RWPE1 (cell line): ENCODE measurements at regions of chr5 and their contacts with region 1.

Region 1: GRCh38 chr5:69093771-69094482 is at the start of gene SLC30A5:
- DNase-seq: peak; percentile 100
- H3K27ac ChIP-seq: peak within 1 kb of the TSS; percentile 87
- CTCF ChIP-seq: peak; percentile 97

Region 2: DNA sequence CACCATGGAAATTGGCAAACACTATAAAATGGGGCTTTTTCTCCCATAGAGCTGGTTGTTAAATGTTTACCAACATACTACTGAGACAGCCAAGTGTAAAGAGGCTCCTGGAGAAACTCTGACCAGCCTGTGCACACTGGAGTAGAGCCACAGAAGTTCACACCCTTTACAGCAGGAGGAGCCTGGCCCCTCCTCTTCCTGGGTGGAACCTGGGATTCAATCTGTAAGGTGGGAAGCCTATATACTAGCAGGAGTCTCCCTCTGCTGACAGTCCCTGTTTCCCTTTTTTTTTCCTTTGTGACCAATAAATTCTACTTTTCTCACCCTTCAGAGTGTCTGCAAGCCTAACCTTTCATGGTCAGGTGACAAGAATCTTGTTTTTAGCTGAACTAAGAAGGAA is 10.5 kb before region 1 on chr5:
- CTCF ChIA-PET with region 1: interaction called, 23 read pairs
- POLR2A ChIA-PET with region 1: no interaction called
- DNase-seq: peak; percentile 26
- H3K27ac ChIP-seq: no peak overlapping the region
- CTCF ChIP-seq: no peak

Region 3: DNA sequence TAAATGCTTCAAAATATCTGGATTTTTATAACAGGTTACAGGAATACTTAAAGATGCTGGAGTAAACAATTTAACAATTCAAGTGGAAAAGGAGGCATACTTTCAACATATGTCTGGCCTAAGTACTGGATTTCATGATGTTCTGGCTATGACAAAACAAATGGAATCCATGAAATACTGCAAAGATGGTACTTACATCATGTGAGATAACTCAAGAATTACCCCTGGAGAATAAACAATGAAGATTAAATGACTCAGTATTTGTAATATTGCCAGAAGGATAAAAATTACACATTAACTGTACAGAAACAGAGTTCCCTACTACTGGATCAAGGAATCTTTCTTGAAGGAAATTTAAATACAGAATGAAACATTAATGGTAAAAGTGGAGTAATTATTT is 35.5 kb after region 1 on chr5:
- CTCF ChIA-PET with region 1: no interaction called
- POLR2A ChIA-PET with region 1: no interaction called
- DNase-seq: peak; percentile 56
- H3K27ac ChIP-seq: no peak overlapping the region
- CTCF ChIP-seq: no peak

Region 4: DNA sequence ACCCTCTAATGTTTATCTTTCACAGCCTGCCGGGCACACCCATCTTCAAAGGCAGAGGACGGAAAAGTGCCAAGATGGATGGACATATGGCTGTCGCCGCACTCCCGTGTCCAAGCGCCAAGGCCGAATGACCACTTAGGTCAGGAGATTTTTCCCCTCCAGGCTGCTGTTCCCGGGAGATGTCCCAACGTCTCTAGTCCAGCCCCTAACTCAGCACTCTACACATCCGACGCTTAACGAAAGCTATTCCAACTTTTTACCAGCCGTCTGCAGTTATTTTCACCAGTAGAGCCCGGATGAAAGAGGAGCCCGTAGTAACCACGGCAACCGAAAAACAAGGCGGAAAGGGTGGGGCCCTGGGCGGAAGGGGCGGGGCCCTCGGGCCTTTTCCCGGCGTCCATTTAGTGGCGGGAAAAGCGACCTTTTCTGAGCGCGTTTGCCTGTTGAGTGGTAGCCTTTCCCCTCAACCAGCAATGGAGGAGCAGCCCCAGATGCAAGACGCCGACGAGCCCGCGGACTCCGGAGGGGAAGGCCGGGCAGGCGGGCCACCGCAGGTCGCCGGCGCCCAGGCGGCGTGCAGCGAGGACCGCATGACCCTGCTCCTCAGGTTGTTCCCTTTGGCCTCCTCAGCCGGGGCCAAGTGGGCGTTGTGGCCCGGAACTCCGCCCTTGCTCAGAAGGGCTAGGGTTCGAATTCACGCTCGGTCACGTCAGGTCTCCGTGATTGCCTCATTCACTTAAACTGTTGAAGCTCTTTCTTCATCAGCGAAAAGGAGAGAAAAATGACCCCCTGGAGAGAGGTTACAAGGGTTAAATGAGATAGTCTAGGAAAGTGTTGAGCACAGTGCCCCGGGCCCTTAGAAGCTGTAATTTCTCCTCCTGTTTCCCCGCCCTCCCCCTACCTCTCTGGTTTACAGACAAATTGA is 95.5 kb after region 1 on chr5 and contains the start of gene CENPH:
- CTCF ChIA-PET with region 1: interaction called, 11 read pairs
- POLR2A ChIA-PET with region 1: interaction called, 4 read pairs
- DNase-seq: peak; percentile 97
- H3K27ac ChIP-seq: peak within 1 kb of the TSS; percentile 96
- CTCF ChIP-seq: no peak

Region 5: DNA sequence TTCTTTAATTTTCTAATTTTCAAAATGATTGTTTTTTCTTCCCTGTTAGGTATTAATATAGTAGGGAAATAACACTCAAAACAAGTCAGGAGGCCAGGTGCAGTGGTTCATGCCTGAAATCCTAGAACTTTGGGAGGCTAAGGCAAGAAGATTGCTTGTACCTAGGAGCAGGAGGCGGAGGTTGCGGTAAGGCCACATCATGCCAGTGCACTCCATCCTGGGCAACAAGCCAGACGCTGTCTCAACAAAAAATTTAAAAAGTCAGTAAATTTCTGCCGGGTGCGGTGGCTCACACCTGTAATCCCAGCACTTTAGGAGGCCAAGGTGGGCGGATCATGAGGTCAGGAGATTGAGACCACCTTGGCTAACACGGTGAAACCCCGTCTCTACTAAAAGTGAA is 130.6 kb after region 1 on chr5:
- CTCF ChIA-PET with region 1: no interaction called
- POLR2A ChIA-PET with region 1: no interaction called
- DNase-seq: no peak
- H3K27ac ChIP-seq: no peak overlapping the region
- CTCF ChIP-seq: no peak

Region 6: DNA sequence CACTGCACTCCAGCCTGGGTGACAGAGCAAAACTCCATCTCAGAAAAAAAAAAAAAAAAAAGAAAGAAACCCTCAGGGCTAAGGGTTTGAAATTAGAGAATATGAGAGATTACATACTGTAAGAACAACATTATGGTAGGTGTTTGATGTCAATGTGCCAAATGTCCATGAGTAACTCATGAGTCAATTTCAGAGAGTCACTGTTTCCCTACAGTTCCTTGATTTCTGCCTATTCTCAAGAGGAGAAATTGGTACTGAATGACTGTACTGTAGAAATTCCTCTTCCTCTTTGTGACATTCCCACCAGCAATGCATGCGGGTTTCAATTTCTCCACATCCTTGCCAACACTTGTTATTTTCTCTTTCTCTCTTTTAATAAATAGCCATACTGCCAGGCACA is 356.2 kb after region 1 on chr5:
- CTCF ChIA-PET with region 1: no interaction called
- POLR2A ChIA-PET with region 1: no interaction called
- DNase-seq: peak; percentile 89
- H3K27ac ChIP-seq: peak overlapping the region; percentile 35; the same call in 1 of the 2 replicates
- CTCF ChIP-seq: no peak